ENCODE measurements at regions of chr9 and their contacts with region 1.

Region 1: DNA sequence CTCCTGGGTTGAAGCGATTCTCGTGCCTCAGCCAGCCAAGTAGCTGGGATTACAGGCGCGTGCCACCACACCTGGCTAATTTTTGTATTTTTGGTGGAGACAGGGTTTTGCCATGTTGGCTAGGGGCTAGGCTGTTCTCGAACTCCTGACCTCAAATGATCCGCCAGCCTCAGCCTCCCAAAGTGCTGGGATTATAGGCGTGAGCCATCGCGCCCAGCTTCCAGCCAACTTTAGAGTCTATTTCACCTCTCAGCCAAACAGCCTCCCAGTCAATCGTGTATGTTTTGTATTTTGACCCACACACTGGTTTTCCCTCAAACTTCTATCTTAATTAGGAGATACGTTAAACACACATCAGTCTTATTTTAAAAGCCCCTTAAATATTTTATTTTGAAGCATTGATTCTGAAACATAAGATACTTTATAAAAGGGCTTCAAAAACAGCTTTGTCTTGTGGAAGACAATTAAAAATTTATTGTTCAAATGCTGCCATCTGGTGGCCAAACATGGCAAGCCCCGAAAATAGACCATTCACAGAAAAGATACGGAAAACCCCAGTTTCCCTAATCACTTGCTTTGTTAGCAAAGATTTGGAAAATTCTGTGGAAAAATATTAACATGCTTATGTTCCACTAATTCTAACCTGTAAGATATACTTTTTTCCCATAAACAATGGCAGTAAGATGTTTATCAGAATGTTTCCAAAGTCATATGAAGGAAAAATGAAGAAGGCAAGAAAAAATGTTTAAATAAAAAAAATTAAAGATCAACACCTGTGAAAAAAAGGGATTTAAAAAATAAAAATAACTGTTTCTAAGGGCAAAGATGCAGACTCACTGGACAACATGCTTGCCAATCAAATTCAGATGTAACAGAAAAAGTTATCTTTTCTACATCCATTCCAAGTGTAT is 33.1 kb downstream of the APTX start:
- DNase-seq: peak; percentile 32 to 60 (median 35)
- ATAC-seq: peak; percentile 58; the same call in 1 of the 3 replicates
- H3K4me3 ChIP-seq: no peak overlapping the region
- H3K27ac ChIP-seq: no peak overlapping the region
- H3K4me1 ChIP-seq: no peaks in the 10 kb centered on the region
- H3K27me3 ChIP-seq: no peaks in the 10 kb centered on the region
- CTCF ChIP-seq: peak; percentile 40 to 77 (median 52); a peak in 5 of 6 replicates
- EP300 ChIP-seq: no peak
- POLR2A ChIP-seq: no peak
- RAD21 ChIP-seq: peak; percentile 82 to 84

Region 2: DNA sequence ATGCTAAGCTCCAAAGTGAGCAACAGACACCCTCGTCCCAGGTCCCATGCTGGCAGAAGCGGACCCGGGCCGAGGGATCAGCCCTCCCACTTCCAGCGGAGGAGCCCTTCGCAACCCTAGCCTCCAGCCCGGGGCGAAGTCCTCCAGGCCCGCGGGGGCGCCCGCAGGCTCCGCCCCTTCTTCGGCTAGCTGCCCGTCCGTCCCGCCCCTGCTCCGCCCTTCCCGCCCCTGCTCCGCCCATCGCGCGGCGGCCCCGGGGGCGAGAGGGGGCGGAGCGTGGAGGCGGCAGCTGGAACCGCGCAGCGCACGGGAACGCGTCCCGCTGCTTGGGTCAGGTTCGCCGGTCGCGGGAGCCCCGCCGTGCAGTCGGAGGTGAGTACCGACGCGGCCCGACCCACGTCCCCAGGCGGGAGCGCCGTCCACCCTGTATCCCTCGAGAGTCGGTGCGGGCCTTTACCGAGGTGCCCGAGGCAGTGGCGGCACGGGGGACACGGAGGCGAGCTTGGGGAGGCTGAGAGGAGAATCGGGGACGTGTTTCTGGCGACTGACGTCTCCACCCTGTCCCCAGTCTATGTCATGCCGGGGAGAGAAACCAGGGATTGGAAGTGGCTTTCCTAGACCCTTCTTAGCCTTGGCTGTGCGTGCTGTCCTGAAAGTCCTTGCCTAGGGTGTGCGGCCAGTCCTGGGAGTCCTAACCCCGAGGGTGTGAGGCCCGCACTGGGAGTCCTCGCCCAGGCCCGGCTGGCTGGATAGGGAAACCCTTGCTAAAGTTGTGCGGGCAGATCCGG is 583.8 kb before region 1 on chr9 and contains the start of gene ACO1:
- CTCF ChIA-PET with region 1: interaction called, 15 read pairs
- POLR2A ChIA-PET with region 1: no interaction called
- in situ Hi-C with region 1: loop called (anchors 5 kb)
- intact Hi-C with region 1: no loop called
- DNase-seq: peak; percentile 86 to 97 (median 96)
- ATAC-seq: peak; percentile 98
- H3K4me3 ChIP-seq: peak within 1 kb of the TSS; percentile 84
- H3K27ac ChIP-seq: peak within 1 kb of the TSS; percentile 59
- H3K4me1 ChIP-seq: peaks cover 0 to 4% of the 10 kb centered on the region in 2 experiments; a peak in 3 of 5 replicates
- H3K27me3 ChIP-seq: no peaks in the 10 kb centered on the region
- CTCF ChIP-seq: peak in 2 of 3 experiments; percentile 23 to 30; a peak in 3 of 6 replicates
- EP300 ChIP-seq: no peak
- POLR2A ChIP-seq: peak; percentile 61
- RAD21 ChIP-seq: no peak
- polyA plus RNA-seq, gene ACO1: 0.96 to 3.0 TPM

Region 3: DNA sequence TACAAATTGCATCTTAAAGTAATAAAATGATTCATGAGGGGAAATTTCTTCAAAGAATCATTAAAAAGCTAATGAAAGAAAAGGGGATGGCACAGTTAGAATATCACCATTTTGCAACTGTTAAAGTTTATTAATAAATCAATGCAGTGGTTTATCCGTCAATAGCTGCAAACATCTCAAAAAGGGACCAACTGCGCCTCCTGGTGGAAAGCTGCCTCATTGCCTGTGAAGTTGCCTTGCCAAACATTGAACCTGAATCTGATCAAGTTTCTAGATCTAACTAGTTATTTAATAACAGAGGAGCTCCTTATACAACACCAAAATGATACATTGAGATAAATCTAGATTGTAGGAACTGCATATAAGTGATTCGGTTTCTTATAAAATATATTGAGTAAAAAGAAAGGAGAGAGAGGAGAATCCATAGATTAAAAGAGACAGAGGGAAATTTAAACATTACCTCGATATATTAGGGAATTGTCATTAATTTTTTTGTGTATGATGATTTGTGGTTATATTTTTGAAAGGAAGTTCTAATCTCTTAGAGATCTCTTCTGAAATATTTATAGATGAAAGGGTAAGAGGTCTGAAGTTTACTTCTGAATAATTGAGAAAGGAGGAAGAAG is 388.5 kb before region 1 on chr9:
- CTCF ChIA-PET with region 1: interaction called, 30 read pairs
- POLR2A ChIA-PET with region 1: no interaction called
- in situ Hi-C with region 1: loop called (anchors 5 kb)
- intact Hi-C with region 1: loop called (anchors 1 kb)
- DNase-seq: peak; percentile 27 to 60 (median 40)
- ATAC-seq: peak; percentile 59; the same call in 1 of the 3 replicates
- H3K4me3 ChIP-seq: no peak overlapping the region
- H3K27ac ChIP-seq: no peak overlapping the region
- H3K4me1 ChIP-seq: no peaks in the 10 kb centered on the region; a peak in 1 of 5 replicates
- H3K27me3 ChIP-seq: no peaks in the 10 kb centered on the region
- CTCF ChIP-seq: peak; percentile 71 to 84 (median 75)
- EP300 ChIP-seq: no peak
- POLR2A ChIP-seq: no peak
- RAD21 ChIP-seq: peak; percentile 60 to 85

Region 4: DNA sequence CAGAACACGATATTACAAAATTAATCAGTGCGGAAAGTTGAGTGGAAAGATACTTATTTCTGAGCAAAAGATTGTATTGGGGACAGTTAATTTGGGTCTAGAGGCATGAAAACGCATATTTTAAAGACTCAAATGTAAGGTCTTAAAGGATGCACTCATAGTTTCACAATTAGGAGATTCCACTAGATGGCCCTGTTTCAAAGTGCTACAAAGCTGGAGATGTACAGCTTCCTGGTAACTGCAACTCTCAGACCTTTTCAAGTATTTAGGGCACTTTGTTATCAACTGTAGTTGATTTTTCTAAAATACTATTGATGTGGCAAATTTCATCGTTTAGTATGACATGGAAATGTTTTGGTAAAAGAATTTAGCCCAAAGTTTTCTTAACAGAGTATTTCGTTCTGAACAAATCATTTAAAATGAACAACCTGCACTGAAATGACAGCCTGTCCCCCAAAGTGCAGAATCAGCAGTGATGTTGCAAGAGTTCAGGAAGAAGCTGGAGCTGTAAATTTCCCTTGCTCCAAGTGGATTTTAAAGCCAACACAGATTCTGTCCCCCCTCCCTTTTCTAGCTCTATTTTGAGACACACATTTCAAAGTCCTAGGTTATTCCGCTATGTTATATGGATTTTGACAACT is 379.2 kb before region 1 on chr9:
- CTCF ChIA-PET with region 1: interaction called, 30 read pairs
- POLR2A ChIA-PET with region 1: no interaction called
- in situ Hi-C with region 1: loop called (anchors 5 kb)
- intact Hi-C with region 1: loop called (anchors 2 kb)
- DNase-seq: peak in 2 of 4 experiments; percentile 30 to 34
- ATAC-seq: peak; percentile 86
- H3K4me3 ChIP-seq: no peak overlapping the region
- H3K27ac ChIP-seq: no peak overlapping the region
- H3K4me1 ChIP-seq: no peaks in the 10 kb centered on the region
- H3K27me3 ChIP-seq: no peaks in the 10 kb centered on the region; a peak in 1 of 5 replicates
- CTCF ChIP-seq: peak; percentile 25 to 61 (median 48); a peak in 4 of 6 replicates
- EP300 ChIP-seq: no peak
- POLR2A ChIP-seq: no peak
- RAD21 ChIP-seq: peak; percentile 53 to 78

Region 5: GRCh38 chr9:32839013-32839885 is 129.1 kb before region 1 on chr9:
- CTCF ChIA-PET with region 1: interaction called, 3 read pairs
- POLR2A ChIA-PET with region 1: no interaction called
- in situ Hi-C with region 1: no loop called
- intact Hi-C with region 1: loop called (anchors 10 kb)
- DNase-seq: no peak
- ATAC-seq: no peak
- H3K4me3 ChIP-seq: no peak overlapping the region
- H3K27ac ChIP-seq: no peak overlapping the region
- H3K4me1 ChIP-seq: no peaks in the 10 kb centered on the region; a peak in 1 of 5 replicates
- H3K27me3 ChIP-seq: no peaks in the 10 kb centered on the region; a peak in 1 of 5 replicates
- CTCF ChIP-seq: peak in 2 of 3 experiments; percentile 13 to 33; a peak in 2 of 6 replicates
- EP300 ChIP-seq: no peak
- POLR2A ChIP-seq: no peak
- RAD21 ChIP-seq: no peak

Region 6: GRCh38 chr9:33101108-33101951 is 133.0 kb after region 1 on chr9:
- CTCF ChIA-PET with region 1: no interaction called
- POLR2A ChIA-PET with region 1: no interaction called
- in situ Hi-C with region 1: no loop called
- intact Hi-C with region 1: no loop called
- DNase-seq: no peak
- ATAC-seq: no peak
- H3K4me3 ChIP-seq: no peak overlapping the region
- H3K27ac ChIP-seq: no peak overlapping the region
- H3K4me1 ChIP-seq: no peaks in the 10 kb centered on the region; a peak in 1 of 5 replicates
- H3K27me3 ChIP-seq: no peaks in the 10 kb centered on the region
- CTCF ChIP-seq: no peak
- EP300 ChIP-seq: no peak
- POLR2A ChIP-seq: no peak
- RAD21 ChIP-seq: no peak

Measured in K562 (cell line).